Heart right ventricle (tissue), 16 donors: ENCODE measurements at regions of chr6 and their contacts with region 1.

Region 1: DNA sequence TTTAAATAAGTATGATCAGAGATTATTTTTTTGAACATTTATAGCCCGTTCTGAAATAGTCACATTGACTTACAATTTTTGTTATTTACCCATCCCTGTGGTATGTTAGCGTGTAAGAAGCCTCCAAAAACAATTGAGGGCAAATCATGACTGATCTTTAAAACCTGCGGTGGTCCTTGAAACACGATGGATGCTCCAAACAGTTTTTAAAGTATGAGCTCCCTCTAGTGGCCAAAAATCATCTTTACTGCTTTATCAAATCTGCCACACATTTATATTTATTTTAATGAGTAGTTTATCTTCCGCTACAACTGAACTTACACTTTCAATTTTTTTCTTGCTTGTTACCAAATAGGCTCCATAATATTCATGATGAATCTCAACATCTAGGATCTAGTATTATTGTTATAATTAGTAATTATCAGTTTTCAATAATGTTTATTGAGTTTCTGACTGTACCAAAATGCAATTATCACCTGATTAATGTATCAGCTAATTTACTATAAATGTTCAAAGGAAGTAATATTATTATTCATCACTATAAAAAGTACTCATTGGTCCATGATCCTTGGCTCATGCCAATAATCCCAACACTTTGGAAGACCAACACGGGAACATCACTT is 52.2 kb downstream of the MARCKS start:
- DNase-seq: peak in 1 of 2 donors; percentile 26
- ATAC-seq: peak in 1 of 8 donors; percentile 43
- H3K4me3 ChIP-seq: no peak overlapping the region
- H3K27ac ChIP-seq: no peak overlapping the region
- H3K4me1 ChIP-seq: peaks cover 0 to 18% (median 4%) of the 10 kb centered on the region in 9 donors
- H3K27me3 ChIP-seq: no peaks in the 10 kb centered on the region
- CTCF ChIP-seq: peak; percentile 62 to 85 (median 75)

Region 2: DNA sequence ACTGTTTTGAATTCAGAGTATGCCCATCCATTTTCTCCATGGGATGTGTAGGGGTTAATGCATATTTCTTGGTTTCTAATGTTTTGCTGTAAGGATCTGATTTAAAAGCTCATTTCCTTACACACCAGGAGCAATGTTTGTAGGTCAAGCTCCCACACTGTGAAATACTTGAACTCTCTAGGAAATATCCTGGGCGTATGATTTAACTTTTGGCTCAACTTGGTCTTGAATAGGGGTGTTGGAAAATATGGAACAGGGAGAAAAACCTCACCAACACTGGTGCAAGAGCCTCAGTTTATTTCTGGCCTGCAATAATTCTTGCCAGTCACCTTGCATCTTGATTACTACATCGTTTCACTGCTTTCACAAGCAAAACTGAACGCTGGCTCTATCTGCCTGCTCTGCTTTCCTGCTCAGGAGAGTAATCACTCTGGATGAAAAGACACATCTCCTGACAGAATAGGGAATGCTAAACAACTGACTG is 1587.4 kb before region 1 on chr6:
- intact Hi-C with region 1: loop called in 1 of 10 experiments (anchors 10 kb)
- DNase-seq: no peak
- ATAC-seq: no peak
- H3K4me3 ChIP-seq: no peak overlapping the region
- H3K27ac ChIP-seq: no peak overlapping the region
- H3K4me1 ChIP-seq: no peaks in the 10 kb centered on the region
- H3K27me3 ChIP-seq: no peaks in the 10 kb centered on the region
- CTCF ChIP-seq: no peak

Region 3: DNA sequence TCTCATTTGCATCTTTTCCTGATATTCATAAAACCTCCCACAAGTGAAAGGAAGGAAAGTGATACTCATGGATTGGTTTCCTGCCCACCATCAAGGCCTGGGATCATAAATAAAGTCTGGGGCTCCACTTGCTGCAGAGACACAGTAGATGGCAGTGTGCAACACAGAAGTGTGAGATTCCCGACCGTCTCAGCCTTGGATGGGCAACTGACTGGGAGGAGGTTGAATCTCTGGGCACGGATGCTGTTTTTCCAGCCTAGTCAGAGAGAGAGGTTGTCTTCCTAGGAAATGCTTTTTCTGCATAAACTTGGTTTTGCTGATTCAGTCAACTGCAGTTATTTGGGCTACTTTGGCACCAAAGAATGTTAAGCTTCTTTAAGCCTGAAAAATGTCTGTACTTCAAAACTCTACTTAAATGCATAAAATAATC is 1572.1 kb before region 1 on chr6:
- intact Hi-C with region 1: loop called in 2 of 10 experiments (anchors 10 kb)
- DNase-seq: peak; percentile 19 to 51
- ATAC-seq: peak; percentile 69 to 93 (median 87)
- H3K4me3 ChIP-seq: no peak overlapping the region
- H3K27ac ChIP-seq: no peak overlapping the region
- H3K4me1 ChIP-seq: no peaks in the 10 kb centered on the region
- H3K27me3 ChIP-seq: no peaks in the 10 kb centered on the region
- CTCF ChIP-seq: peak; percentile 34 to 74 (median 64)

Region 4: DNA sequence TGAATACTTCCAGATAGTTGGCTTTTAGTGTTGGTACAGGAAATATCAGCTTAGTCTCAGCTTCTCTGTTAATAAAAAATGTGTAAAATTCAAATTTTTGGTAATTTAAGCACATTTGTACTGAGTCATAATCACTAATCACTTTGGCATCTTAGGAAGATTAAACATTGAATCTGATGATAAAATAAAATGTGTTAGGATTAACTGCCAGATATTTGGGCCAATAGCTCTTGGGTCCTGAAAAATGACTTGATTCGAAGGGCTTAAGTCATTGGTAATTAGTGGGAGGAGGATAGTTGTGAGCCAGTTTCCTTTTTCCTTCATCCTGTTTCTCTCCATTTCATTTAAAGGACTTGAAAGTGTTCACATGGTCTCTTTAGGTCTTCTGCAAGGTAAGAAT is 1136.2 kb before region 1 on chr6:
- intact Hi-C with region 1: loop called in 3 of 10 experiments (anchors 1 to 10 kb)
- DNase-seq: no peak
- ATAC-seq: no peak
- H3K4me3 ChIP-seq: no peak overlapping the region
- H3K27ac ChIP-seq: no peak overlapping the region
- H3K4me1 ChIP-seq: no peaks in the 10 kb centered on the region
- H3K27me3 ChIP-seq: no peaks in the 10 kb centered on the region
- CTCF ChIP-seq: no peak

Region 5: DNA sequence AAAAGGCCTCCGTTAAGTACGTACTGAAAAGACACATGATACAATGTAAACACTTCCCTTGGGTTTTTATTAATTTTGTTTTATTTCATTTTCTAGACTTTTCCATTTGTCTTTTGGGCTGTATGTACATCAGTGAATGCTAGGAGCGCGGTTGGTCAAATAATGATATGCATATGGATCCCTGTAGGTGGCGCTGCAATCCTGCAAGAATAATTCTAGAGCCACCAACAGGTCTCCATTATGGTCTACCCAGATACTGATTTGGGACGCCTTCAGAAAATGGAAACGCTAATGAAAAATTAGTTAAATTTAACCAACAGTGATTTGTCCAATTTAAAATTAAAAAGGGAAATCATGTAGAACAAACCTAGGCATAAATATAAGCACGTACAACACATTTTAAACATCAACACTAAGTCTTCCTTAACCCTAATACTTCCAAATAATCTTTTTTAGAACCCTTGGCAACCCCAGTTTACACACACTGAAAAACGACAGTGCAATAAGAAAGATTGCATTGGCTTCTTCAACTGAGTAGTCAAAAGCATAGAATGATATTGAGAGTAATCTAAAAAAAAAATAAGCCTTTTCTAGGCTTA is 1128.7 kb before region 1 on chr6:
- intact Hi-C with region 1: loop called in 9 of 10 experiments (anchors 1 to 10 kb)
- DNase-seq: peak; percentile 20 to 83
- ATAC-seq: peak in 7 of 8 donors; percentile 81 to 96 (median 91)
- H3K4me3 ChIP-seq: no peak overlapping the region
- H3K27ac ChIP-seq: no peak overlapping the region
- H3K4me1 ChIP-seq: peaks cover 0 to 5% (median 0%) of the 10 kb centered on the region in 9 donors
- H3K27me3 ChIP-seq: no peaks in the 10 kb centered on the region
- CTCF ChIP-seq: peak; percentile 76 to 94 (median 86)

Region 6: DNA sequence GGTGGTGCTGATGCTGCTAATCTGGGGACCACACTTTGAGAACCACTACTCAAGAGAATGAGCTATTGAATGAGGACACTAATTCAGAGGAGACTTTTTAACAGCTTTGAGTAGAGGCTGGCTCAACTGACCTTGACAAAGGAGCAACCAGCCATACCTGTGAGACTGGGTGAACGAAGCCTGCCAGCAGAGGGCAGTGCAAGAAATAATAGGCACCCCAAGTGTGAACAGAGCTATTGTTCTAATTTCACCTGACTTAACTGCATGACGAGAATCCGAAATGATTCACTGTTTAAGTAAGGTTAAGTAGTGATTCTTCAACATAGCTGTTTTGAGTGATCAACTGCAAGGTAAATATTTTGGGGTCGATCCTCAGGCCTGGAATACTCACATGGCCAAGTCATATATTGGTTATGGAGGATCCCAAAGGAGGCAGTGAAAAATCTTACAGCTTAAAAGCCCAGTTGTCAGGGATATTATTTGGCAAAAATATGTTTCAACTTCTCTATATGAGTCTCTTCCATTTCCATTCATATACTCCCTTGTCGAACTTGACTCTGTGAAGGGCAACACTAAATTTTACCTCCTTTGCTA is 602.7 kb before region 1 on chr6:
- intact Hi-C with region 1: loop called in 1 of 10 experiments (anchors 10 kb)
- DNase-seq: peak; percentile 37 to 40
- ATAC-seq: peak in 6 of 8 donors; percentile 33 to 89 (median 69)
- H3K4me3 ChIP-seq: no peak overlapping the region
- H3K27ac ChIP-seq: no peak overlapping the region
- H3K4me1 ChIP-seq: no peaks in the 10 kb centered on the region
- H3K27me3 ChIP-seq: no peaks in the 10 kb centered on the region
- CTCF ChIP-seq: peak in 7 of 9 donors; percentile 40 to 74 (median 63)

Region 7: GRCh38 chr6:113732384-113732966 is 176.9 kb before region 1 on chr6:
- intact Hi-C with region 1: no loop called
- DNase-seq: peak; percentile 12 to 72
- ATAC-seq: peak; percentile 88 to 97 (median 94)
- H3K4me3 ChIP-seq: peak overlapping the region in 4 of 10 donors; percentile 1 to 22 (median 10)
- H3K27ac ChIP-seq: peak overlapping the region in 7 of 10 donors; percentile 15 to 70 (median 45)
- H3K4me1 ChIP-seq: peaks cover 0 to 28% (median 13%) of the 10 kb centered on the region in 9 donors
- H3K27me3 ChIP-seq: no peaks in the 10 kb centered on the region
- CTCF ChIP-seq: peak in 7 of 9 donors; percentile 11 to 52 (median 35)